Left colon (tissue), 2 donors: ENCODE measurements at regions of chr1 and their contacts with region 1.

Region 1: GRCh38 chr1:50704126-50704525 is 255.9 kb downstream of the FAF1 start:
- DNase-seq: no peak
- ATAC-seq: peak; percentile 45

Region 2: GRCh38 chr1:50368179-50369012 is 335.7 kb before region 1 on chr1:
- intact Hi-C with region 1: loop called in 1 of 2 experiments (anchors 10 kb)
- DNase-seq: peak in 1 of 2 donors; percentile 46
- ATAC-seq: peak; percentile 71

Region 3: DNA sequence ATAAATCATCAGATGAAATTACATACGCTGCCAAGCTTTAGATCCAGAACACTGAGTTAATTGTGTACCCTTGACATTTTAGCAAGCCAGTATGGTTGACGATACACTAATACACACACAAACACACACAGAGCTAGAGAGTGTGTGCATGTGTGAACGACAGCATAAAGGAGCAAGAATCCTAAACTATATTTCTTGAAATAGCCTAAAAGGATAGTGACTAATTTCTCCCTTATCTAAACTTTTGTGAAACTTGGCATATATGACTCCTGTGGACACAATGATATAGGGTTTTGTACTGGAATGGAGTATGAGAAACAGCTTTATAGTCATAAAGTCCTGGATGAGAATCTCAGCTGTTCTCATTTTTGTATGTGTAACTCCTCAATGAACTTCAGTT is 215.8 kb before region 1 on chr1:
- intact Hi-C with region 1: no loop called
- DNase-seq: no peak
- ATAC-seq: no peak

Region 4: DNA sequence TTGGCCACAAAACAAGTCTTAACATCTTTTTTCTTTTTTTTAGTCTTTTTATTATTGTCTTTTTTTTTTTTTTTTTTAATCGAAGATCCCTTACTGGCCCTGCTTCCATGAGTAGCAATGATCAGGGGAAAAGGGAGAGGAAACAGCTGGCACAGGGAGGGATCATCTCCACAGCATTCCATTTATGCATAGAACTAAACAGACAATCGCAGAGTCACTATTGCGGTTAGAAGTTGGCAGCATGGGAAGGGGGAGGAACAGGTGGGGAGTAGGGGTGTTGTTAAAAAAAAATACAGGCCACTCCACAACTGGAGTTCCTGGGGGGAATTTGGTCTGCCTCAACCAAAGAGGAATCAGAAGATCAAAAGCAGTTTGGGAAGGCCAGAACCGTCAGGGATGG is 453.3 kb after region 1 on chr1:
- intact Hi-C with region 1: no loop called
- DNase-seq: no peak
- ATAC-seq: no peak